ENCODE measurements at regions of chr13 and their contacts with region 1.

Region 1: DNA sequence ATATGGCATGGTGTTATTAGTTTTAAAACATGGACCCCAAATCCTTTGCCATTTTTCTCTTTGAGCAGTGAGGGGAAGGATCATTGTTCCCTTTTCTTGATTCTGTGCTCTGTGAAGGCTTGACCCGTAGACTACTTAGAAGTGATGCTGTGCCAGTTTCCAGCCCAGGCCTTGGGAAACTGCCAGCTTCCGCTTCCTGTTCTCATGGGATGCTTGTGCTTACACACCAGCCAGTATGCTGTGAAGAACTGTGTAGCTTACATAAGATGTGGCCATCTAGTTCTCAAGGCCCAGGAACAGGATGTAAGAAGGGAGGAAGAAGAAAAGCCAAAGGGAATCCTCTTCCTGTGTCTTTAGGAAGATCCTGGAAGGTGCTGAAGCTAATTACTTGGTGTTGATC is 180.9 kb downstream of the PCCA start:
- DNase-seq: peak; percentile 93

Region 2: GRCh38 chr13:99144306-99144705 is 1125.5 kb before region 1 on chr13:
- intact Hi-C with region 1: loop called in 1 of 2 experiments (anchors 10 kb)
- DNase-seq: no peak

Region 3: GRCh38 chr13:100573121-100573520 is 303.3 kb after region 1 on chr13:
- intact Hi-C with region 1: no loop called
- DNase-seq: no peak

Region 4: DNA sequence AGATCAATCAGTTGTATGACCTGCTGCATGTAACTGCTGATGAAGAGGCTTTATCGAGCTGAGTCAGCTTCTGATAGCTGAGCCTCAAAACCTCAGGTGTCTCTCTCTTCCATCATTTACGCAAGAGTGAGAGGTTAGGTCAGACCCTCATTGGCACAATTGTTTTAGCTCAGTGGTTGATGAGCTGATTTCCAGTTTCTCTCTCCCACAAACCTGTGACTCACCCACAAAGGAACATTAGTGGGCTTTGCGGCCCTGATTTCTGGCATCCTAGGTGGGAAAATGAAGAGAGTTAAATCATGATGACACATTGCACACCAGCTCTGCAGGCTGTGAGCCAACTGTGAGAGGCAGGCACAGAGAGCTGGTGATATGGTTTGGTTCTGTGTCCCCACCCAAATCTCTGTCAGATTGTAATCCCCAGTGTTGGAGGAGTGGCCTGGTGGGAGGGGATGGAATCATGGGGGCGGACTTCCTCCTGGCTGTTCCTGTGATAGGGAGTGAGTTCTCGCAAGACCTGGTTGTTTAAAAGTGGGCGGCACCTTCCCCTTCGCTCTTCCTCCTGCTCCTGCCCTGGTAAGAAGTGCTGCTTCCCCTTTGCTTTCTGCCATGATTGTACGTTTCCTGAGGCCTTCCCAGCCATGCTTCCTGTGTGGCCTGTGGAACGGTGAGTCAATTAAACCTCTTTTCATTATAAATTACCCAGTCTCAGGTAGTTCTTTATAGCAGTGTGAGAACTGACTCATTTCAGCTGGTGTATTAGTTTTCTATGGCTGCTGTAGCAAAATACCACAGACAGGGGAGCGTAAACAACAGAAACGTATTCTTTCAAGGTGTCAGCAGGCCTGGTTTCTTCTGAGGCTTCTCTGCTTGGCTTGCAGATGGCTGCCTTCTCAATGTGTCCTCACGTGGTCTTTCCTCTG is 438.2 kb after region 1 on chr13:
- intact Hi-C with region 1: no loop called
- DNase-seq: no peak